WTC11 (cell line): ENCODE measurements at regions of chr14 and their contacts with region 1.

Region 1: DNA sequence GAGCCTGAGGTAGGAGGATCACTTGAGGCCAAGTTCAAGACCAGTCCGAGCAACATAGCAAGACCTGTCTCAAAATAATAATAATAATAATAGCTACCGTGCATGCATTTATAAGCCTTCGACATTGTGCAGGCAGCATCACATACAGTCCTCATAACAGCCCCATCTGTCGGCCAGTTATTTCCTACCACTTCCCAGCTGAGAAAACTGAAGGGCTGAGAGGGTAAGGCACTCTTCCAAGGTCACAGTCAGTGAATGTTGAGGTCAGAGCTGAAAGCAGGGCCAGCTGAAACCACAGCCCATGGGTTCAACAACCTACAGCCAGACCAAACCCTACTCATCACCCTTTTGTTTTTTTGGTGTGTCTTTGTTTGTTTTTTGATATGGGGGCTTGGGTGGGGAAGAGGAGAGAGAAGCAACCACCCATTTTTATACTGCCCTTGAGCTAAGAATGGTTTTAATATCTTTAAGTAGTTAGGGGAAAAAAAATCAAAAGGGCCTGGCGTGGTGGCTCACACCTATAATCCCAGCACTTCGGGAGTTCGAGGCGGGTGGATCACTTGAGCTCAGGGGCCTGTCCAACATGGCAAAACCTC is 16.8 kb upstream of the ITPK1 start:
- DNase-seq: no peak
- ATAC-seq: peak; percentile 91
- H3K4me3 Mint-ChIP-seq: no peak overlapping the region
- H3K27ac Mint-ChIP-seq: peak overlapping the region; percentile 93
- H3K4me1 Mint-ChIP-seq: peaks cover 2% of the 10 kb centered on the region; the same call in 1 of the 2 replicates
- H3K27me3 Mint-ChIP-seq: no peaks in the 10 kb centered on the region
- CTCF ChIP-seq: no peak

Region 2: GRCh38 chr14:92880869-92881289 is 251.7 kb before region 1 on chr14:
- CTCF ChIA-PET with region 1: no interaction called
- POLR2A ChIA-PET with region 1: no interaction called
- DNase-seq: peak; percentile 55
- ATAC-seq: peak; percentile 90
- H3K4me3 Mint-ChIP-seq: peak overlapping the region; percentile 25
- H3K27ac Mint-ChIP-seq: no peak overlapping the region
- H3K4me1 Mint-ChIP-seq: peaks cover 22% of the 10 kb centered on the region
- H3K27me3 Mint-ChIP-seq: peaks cover 4% of the 10 kb centered on the region
- CTCF ChIP-seq: peak; percentile 26; the same call in 1 of the 2 replicates

Region 3: DNA sequence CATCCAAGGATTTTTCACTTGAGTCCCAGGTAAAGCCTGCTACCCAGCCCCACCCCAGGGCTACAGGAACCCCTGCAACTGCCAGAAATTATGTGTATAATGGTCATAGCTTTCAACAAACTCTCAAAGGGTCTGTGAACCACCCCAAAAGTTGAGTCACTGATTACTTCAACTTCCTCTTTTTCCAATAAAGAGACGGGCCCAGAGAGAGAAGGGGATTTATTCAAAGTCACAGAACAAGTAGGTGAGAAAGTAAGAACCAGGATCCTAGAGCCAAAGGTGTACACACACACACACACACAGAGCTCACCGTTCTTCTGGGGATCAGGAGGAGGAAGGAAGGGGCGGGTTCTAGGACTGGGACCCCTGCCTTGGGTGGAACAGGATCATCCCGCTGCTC is 12.1 kb before region 1 on chr14:
- CTCF ChIA-PET with region 1: interaction called, 131 read pairs
- POLR2A ChIA-PET with region 1: no interaction called
- DNase-seq: no peak
- ATAC-seq: no peak
- H3K4me3 Mint-ChIP-seq: no peak overlapping the region
- H3K27ac Mint-ChIP-seq: no peak overlapping the region
- H3K4me1 Mint-ChIP-seq: peaks cover 5% of the 10 kb centered on the region
- H3K27me3 Mint-ChIP-seq: no peaks in the 10 kb centered on the region; the same call in 1 of the 2 replicates
- CTCF ChIP-seq: no peak

Region 4: DNA sequence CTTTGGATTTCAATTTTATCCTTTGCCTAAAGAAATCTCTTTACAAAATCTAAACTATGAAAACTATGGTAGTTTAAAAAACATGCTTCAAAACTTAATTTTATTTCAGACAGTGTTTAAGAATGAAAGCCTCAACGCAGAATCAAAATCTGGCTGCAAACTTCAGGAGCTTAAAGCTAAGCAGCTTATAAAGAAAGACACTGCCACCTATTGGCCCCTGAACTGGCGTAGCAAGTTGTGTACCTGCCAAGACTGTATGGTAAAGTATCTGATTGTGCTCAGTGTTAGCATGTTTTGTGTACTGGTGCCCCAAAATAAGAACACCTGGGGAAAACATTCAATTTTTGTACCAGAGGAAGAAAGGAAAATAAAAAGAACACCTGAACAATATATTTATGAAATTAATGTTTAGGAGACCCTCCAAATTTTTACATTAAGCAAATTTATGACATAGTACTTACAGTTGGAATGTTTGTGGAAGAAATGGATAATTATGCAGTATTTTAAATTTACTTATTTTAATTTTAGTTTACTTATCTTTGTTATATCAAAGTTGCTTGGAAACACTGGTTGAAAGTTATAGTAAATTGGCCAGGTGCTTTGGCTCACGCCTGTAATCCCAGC is 86.6 kb after region 1 on chr14:
- CTCF ChIA-PET with region 1: no interaction called
- POLR2A ChIA-PET with region 1: no interaction called
- DNase-seq: peak; percentile 46
- ATAC-seq: peak; percentile 83; the same call in 1 of the 2 replicates
- H3K4me3 Mint-ChIP-seq: no peak overlapping the region
- H3K27ac Mint-ChIP-seq: no peak overlapping the region
- H3K4me1 Mint-ChIP-seq: no peaks in the 10 kb centered on the region
- H3K27me3 Mint-ChIP-seq: no peaks in the 10 kb centered on the region
- CTCF ChIP-seq: no peak